PC-3 (cell line): ENCODE measurements at regions of chr17 and their contacts with region 1.

Region 1: GRCh38 chr17:4199818-4200402 is 56.9 kb downstream of the CYB5D2 start:
- DNase-seq: peak; percentile 39
- ATAC-seq: no peak
- H3K4me3 ChIP-seq: no peak overlapping the region
- H3K27ac ChIP-seq: no peak overlapping the region
- H3K4me1 ChIP-seq: no peaks in the 10 kb centered on the region; the same call in 1 of the 2 replicates
- H3K27me3 ChIP-seq: no peaks in the 10 kb centered on the region
- CTCF ChIP-seq: peak; percentile 65

Region 2: DNA sequence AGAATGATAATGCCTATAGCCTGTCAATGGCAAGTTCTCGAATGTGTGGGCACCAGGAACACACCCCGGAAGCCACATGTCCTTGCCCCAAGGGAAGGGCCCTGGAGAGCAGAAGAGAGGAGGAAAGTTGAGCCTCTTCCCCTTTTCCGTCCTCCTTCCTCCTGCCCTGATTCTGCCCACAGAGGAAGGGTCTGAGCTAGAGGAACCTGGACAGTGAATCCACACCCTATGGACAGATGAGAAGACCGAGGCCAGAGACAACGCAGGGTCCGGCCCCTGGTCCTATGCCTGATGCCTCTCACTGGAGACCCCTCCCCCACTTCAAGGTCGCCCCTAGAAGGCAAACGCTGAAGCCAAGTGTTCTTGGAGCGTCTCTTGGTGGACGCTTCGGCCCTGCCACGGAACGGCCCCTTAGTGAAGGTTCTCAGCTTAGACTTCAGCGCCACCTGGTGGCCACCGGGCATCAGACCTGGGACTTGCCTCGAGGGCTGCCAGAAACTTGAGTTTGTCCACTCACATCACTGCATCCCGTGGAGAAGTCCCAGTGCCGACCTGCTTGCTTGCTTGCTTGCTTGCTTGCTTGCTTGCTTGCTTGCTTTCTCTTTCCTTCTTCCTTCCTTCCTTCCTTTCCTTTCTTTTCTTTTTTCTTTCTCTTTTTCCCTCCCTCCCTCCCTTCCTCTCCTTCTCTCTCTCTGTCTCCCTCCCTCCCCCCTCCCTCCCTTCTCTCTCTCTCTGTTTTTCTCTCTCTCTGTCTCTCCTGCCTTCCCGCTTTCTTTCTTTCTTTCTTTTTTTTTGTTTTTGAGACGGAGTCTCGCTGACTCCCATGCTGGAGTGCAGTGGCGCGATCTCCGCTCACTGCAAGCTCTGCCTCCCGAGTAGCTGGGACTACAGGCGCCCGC is 213.3 kb after region 1 on chr17:
- CTCF ChIA-PET with region 1: interaction called, 6 read pairs
- POLR2A ChIA-PET with region 1: no interaction called
- intact Hi-C with region 1: loop called (anchors 2 kb)
- DNase-seq: peak; percentile 85
- ATAC-seq: peak; percentile 98
- H3K4me3 ChIP-seq: peak overlapping the region; percentile 38; the same call in 1 of the 2 replicates
- H3K27ac ChIP-seq: no peak overlapping the region
- H3K4me1 ChIP-seq: no peaks in the 10 kb centered on the region; the same call in 1 of the 2 replicates
- H3K27me3 ChIP-seq: no peaks in the 10 kb centered on the region
- CTCF ChIP-seq: peak; percentile 77